ENCODE measurements at regions of chr11 and their contacts with region 1.

Region 1: GRCh38 chr11:15208378-15209222 is 93.9 kb downstream of the INSC start:
- DNase-seq: peak; percentile 71
- H3K4me3 Mint-ChIP-seq: no peak overlapping the region
- H3K27ac Mint-ChIP-seq: no peak overlapping the region
- H3K4me1 Mint-ChIP-seq: no peaks in the 10 kb centered on the region
- H3K27me3 Mint-ChIP-seq: no peaks in the 10 kb centered on the region
- CTCF ChIP-seq: peak; percentile 95

Region 2: GRCh38 chr11:15038963-15039362 is 169.6 kb before region 1 on chr11:
- CTCF ChIA-PET with region 1: interaction called, 3 read pairs
- POLR2A ChIA-PET with region 1: no interaction called
- intact Hi-C with region 1: loop called (anchors 1 kb)
- DNase-seq: peak; percentile 67
- H3K4me3 Mint-ChIP-seq: no peak overlapping the region
- H3K27ac Mint-ChIP-seq: no peak overlapping the region
- H3K4me1 Mint-ChIP-seq: no peaks in the 10 kb centered on the region
- H3K27me3 Mint-ChIP-seq: no peaks in the 10 kb centered on the region
- CTCF ChIP-seq: peak; percentile 64